Posterior vena cava (tissue), 2 donors: ENCODE measurements at regions of chr19 and their contacts with region 1.

Region 1: DNA sequence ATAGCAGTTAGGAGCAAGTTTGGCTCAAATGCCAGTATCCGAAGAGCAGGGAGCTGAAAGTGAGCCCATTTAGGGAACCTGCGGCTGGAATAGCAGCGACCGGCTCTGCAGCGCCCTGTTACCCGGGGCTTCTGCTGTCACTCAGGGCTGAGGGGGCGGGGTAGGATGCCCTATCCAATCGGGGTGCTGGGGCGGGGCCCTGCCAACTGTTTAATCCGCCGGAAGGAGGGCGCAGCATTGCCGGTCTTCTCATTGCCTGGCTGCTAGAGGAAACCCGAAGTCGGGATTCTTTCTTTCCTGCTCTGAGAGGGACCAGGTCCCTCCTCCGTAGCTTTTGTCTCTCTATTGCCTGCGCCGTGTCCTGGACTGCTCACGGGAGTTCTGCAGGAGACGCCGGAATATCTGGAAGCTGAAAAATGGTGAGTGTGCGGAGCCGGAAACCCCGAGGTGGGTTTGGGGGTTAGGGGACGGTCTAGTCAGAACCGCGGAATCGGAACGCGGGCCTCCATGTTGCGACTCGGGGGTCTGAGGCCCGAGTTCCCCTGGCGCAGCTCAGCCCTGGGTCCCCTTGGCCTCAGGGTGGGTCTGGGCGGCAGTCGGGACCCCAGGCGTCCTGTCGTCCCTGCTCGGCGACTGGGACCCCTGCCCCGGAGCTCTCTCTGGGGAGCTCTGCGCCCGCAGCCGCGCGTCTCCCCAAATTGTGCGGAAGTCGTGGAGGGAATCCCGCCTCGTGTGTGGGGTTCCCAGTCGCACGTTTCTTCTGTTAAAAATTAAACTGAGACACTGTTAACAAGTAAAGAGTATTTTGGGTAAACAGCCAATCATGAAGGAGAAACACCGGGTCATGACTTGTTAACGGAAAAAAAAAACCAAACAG is 22.8 kb downstream of the ZNF763 start:
- DNase-seq: peak; percentile 99

Region 2: DNA sequence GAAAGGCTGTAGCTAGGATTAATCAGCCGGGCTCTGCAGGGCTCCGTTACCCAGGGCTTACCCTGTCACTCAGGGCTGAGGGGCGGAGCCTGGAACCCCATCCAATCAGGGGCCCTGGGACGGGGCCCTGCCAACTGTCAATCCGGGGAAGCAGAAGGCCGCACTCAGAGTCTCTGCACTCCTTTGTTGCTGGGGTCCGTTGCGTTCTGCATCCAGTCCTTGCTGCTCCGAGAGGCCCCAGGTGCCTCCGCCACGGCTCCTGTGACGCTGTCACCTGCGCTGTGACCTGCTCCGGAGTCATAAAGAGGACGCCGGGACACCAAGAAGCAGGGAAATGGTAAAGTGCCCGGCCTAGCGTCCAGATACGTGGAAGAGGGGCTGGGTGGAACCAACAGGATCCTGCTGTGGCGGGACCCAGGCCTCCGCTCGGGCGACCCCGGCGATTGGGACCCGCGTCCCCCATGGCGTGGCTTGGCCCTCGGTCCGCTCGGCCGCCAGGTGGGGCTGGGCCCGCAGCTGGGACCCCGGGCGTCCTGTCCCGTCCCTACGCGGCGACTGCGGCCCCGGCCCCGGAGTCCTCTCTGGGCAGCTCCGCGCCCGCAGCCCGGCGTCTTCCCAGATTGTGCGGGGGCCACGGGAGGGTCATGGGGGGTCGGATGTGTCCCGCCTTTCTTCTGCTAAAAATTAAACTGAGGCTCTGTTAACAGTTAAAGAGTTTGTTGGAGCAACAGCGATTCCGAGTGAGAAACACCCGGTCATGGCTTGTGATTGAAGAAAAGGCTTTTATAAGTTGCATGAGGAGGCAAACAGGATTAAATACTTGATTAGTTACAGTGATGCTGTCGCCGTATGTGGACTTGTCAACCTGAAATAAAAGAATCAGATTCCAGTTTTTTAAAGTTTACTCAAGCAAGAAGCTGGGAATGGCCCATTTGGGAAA is 189.0 kb before region 1 on chr19 and contains the start of gene ZNF491:
- intact Hi-C with region 1: loop called in 1 of 2 experiments (anchors 5 kb)
- DNase-seq: peak; percentile 96
- total RNA-seq, gene ZNF491: 2.4 to 2.9 TPM

Region 3: GRCh38 chr19:11881151-11881800 is 106.4 kb before region 1 on chr19:
- intact Hi-C with region 1: loop called in 1 of 2 experiments (anchors 5 kb)
- DNase-seq: no peak

Region 4: GRCh38 chr19:11924886-11925650 is 62.6 kb before region 1 on chr19 and contains the start of gene ZNF700:
- intact Hi-C with region 1: loop called in 1 of 2 experiments (anchors 2 kb)
- DNase-seq: peak; percentile 97
- total RNA-seq, gene ZNF700: 9.9 to 11.6 TPM

Region 5: DNA sequence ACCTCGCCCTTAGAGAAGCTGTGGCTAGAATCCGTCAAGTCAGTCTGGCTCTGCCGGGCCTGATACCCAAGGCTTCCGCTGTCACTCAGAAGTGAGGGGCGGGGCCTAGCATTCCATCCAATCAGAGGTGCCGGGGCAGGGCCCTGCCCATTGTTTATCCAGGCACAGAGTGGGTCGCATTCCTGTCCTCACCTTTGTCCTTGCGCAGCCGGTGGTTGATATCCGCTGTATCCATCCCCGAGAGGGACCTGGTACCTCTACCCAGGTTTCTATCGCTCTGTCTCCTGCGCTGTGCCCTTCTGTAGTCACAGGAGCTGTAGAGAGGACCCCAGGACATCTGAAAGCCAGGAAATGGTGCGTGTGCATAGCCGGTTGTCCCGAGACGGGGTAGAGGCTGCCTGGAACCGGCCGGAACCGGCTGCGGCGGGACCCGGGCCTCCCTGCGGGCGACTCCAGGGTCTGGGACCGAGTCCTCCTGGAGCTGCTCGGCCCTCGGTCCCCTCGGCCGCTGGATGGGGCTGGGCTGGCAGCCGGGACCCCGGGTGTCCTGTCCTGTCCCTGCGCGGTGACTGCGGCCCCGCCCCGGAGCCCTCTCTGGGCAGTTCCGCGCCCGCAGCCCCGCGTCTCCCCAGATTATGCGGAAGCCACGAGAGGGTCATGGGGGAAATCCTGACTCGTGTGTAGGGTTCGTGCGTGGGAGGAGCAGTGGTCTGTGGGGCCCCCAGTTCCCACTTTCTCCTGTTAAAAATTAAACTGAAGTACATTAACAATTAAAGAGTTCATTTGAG is 22.6 kb before region 1 on chr19 and contains the start of gene ZNF763:
- intact Hi-C with region 1: loop called in 1 of 2 experiments (anchors 1 kb)
- DNase-seq: peak; percentile 97
- total RNA-seq, gene ZNF763: 1.7 to 2.4 TPM